ENCODE measurements at regions of chr20 and their contacts with region 1.

Region 1: DNA sequence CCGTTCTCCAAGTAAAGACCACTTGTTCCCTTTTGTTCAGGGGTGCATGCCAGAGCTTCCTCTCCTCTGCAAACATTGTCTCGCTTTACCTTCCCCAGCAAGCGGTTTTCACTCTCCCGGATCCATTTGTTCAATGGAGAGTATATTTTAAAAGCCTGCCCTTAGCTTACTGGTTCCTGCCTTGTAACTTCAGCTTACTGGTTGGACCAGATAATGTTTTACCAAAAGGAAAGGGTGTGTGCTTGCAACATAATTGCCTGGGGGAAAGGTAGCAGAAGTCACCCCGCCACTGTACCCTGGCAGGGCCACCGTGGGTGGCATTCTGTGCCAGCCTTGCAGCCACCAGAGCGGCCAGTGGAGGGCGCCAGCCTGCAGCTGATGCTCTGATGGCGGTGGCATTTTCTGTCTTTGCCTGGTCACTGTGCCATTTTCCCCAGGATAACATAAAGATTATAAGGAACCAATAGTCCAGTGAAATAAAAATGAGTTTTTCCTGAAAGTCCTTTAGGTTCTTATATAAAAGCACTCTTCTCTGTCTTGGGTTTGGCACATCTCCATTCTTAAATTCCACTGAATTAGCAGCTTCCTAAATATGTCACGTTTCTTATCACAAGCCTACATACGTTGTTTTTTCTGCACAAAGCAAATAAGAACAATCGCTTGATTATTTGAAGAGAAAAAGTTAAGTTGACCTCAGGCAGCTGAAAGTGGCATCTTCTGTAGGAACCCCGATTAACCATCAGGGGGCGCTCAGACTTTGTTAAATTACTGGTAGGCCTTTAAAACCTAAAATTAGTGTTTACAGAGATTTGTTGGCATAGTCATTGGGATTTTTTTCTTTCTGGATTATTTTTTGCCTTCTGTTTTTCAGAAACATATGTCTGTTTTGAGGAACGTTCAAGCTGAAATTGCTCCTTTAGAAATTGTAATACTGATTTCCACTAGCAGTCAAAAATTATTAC is 67.4 kb upstream of the XRN2 start:
- DNase-seq: no peak
- ATAC-seq: peak; percentile 82
- H3K4me3 ChIP-seq: no peak overlapping the region
- H3K27ac ChIP-seq: no peak overlapping the region
- H3K4me1 ChIP-seq: no peaks in the 10 kb centered on the region
- H3K27me3 ChIP-seq: no peaks in the 10 kb centered on the region
- CTCF ChIP-seq: peak; percentile 74 to 89 (median 78)
- EP300 ChIP-seq: no peak
- POLR2A ChIP-seq: no peak
- RAD21 ChIP-seq: peak; percentile 85

Region 2: GRCh38 chr20:21048841-21049273 is 186.9 kb before region 1 on chr20:
- CTCF ChIA-PET with region 1: interaction called, 3 read pairs
- POLR2A ChIA-PET with region 1: no interaction called
- RAD21 ChIA-PET with region 1: no interaction called
- SMC1A ChIA-PET with region 1: interaction called, 4 read pairs
- in situ Hi-C with region 1: no loop called
- intact Hi-C with region 1: loop called (anchors 10 kb)
- DNase-seq: no peak
- ATAC-seq: peak; percentile 93
- H3K4me3 ChIP-seq: no peak overlapping the region
- H3K27ac ChIP-seq: no peak overlapping the region
- H3K4me1 ChIP-seq: no peaks in the 10 kb centered on the region
- H3K27me3 ChIP-seq: no peaks in the 10 kb centered on the region; a peak in 1 of 4 replicates
- CTCF ChIP-seq: peak; percentile 69 to 96 (median 92)
- EP300 ChIP-seq: no peak
- POLR2A ChIP-seq: no peak
- RAD21 ChIP-seq: peak; percentile 65

Region 3: DNA sequence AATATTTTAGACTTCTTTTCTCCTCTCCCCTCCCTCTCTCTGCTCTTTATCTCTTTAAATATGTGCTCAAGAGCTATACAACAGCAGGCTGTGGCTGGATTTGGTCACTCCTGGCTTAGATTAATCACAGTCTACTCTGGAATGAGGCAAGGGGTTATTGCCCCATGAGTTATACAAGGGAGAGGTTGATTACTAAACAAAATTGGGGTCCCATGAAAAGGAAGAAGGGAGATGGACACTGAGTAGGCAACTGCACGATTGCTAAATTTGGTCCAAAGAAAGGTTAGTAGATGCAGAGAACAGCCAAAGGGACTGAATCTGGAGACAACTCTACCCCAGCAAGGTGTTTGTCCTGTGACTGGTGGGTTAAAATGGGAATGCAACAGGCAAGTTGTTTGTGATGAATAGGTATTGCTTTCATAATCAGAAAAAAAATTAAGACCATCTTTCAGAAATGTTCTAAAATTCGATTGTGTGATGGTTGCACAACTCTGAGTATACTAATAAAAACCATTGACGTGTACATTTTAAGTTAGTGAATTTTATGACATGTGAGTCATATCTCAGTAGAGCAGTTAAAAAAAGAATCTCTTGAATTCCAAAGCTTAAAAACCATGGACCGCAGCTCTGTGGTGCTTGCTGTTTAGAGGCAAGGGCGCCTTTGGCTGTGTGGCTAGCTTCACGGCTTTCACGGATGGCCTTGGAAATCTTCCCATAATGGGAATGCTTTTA is 52.8 kb before region 1 on chr20:
- CTCF ChIA-PET with region 1: no interaction called
- POLR2A ChIA-PET with region 1: no interaction called
- RAD21 ChIA-PET with region 1: no interaction called
- SMC1A ChIA-PET with region 1: no interaction called
- in situ Hi-C with region 1: no loop called
- intact Hi-C with region 1: no loop called
- DNase-seq: no peak
- ATAC-seq: no peak
- H3K4me3 ChIP-seq: no peak overlapping the region
- H3K27ac ChIP-seq: no peak overlapping the region
- H3K4me1 ChIP-seq: no peaks in the 10 kb centered on the region
- H3K27me3 ChIP-seq: no peaks in the 10 kb centered on the region
- CTCF ChIP-seq: no peak
- EP300 ChIP-seq: no peak
- POLR2A ChIP-seq: no peak
- RAD21 ChIP-seq: no peak

Region 4: GRCh38 chr20:21246161-21246560 is 10.4 kb after region 1 on chr20:
- CTCF ChIA-PET with region 1: interaction called, 18 read pairs
- POLR2A ChIA-PET with region 1: no interaction called
- RAD21 ChIA-PET with region 1: no interaction called
- SMC1A ChIA-PET with region 1: interaction called, 4 read pairs
- in situ Hi-C with region 1: no loop called
- intact Hi-C with region 1: no loop called
- DNase-seq: no peak
- ATAC-seq: no peak
- H3K4me3 ChIP-seq: no peak overlapping the region
- H3K27ac ChIP-seq: no peak overlapping the region
- H3K4me1 ChIP-seq: no peaks in the 10 kb centered on the region
- H3K27me3 ChIP-seq: no peaks in the 10 kb centered on the region
- CTCF ChIP-seq: no peak
- EP300 ChIP-seq: no peak
- POLR2A ChIP-seq: no peak
- RAD21 ChIP-seq: no peak

Region 5: GRCh38 chr20:21373436-21373835 is 137.7 kb after region 1 on chr20:
- CTCF ChIA-PET with region 1: interaction called, 4 read pairs
- POLR2A ChIA-PET with region 1: no interaction called
- RAD21 ChIA-PET with region 1: interaction called, 3 read pairs
- SMC1A ChIA-PET with region 1: no interaction called
- in situ Hi-C with region 1: no loop called
- intact Hi-C with region 1: loop called (anchors 5 kb)
- DNase-seq: no peak
- ATAC-seq: no peak
- H3K4me3 ChIP-seq: no peak overlapping the region
- H3K27ac ChIP-seq: no peak overlapping the region
- H3K4me1 ChIP-seq: no peaks in the 10 kb centered on the region
- H3K27me3 ChIP-seq: no peaks in the 10 kb centered on the region
- CTCF ChIP-seq: no peak
- EP300 ChIP-seq: no peak
- POLR2A ChIP-seq: no peak
- RAD21 ChIP-seq: no peak

Region 6: DNA sequence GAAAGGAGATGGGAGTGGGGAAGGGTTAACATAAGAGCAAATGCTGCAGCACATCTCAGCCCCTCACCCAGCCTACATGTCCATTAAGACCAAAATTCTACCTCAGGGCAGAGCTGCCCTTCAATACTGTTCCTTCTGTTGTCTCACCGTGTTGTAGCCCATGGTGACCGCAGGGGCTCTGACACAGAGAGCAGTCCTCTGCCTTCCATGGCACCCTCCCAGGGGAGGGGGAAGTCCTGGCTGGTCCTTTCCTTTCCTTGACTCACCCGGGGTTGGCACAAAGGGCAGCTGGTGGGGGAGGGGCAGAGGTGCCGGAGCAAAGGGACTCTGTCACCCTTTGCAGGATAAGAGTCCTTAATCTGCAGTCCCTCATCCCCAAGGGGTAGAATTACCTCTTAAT is 262.9 kb after region 1 on chr20:
- CTCF ChIA-PET with region 1: interaction called, 202 read pairs
- POLR2A ChIA-PET with region 1: no interaction called
- RAD21 ChIA-PET with region 1: interaction called, 75 read pairs
- SMC1A ChIA-PET with region 1: interaction called, 94 read pairs
- in situ Hi-C with region 1: loop called (anchors 5 kb)
- intact Hi-C with region 1: no loop called
- DNase-seq: no peak
- ATAC-seq: no peak
- H3K4me3 ChIP-seq: no peak overlapping the region
- H3K27ac ChIP-seq: no peak overlapping the region
- H3K4me1 ChIP-seq: peaks cover 9% of the 10 kb centered on the region
- H3K27me3 ChIP-seq: no peaks in the 10 kb centered on the region; a peak in 3 of 4 replicates
- CTCF ChIP-seq: no peak
- EP300 ChIP-seq: no peak
- POLR2A ChIP-seq: no peak
- RAD21 ChIP-seq: no peak

Region 7: DNA sequence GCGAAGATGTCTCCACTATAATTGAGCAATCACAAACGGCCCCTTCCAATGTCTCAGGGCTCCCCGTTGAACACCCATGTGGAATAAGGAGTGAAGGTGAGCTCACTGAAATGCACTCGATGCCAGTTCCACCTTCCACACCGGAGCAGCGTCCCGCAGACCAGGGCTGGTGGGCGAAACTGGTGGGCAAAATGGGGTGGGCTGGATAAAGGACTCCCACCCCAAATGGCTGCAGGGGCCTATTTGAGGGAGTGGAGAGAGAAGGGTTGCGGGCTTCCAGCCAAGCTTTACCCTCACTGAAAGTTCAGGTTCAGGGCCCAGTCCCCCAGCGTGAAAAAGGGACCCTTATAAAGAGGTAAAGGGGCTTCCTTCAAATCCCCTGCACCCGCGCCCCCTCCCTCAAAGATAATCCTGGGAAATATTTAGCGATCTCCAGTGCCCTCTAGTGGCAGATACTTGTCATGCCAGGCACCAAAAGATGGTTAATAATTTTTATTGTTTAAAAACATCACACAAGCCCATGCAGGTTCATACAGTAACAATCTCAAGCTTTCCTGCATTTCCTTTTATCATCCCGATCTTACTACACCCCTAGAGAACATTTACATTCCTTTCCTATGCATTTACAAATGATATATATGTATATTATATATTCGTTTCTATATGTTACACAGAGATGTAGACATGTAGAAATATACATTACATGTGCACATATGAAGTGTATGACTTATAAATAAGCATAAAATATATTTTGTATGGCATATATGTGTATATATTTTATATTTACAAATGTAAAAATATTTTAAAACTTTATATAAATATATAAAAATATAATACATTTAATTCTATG is 336.3 kb after region 1 on chr20:
- CTCF ChIA-PET with region 1: interaction called, 38 read pairs
- POLR2A ChIA-PET with region 1: interaction called, 5 read pairs
- RAD21 ChIA-PET with region 1: interaction called, 10 read pairs
- SMC1A ChIA-PET with region 1: interaction called, 22 read pairs
- in situ Hi-C with region 1: no loop called
- intact Hi-C with region 1: loop called (anchors 2 kb)
- DNase-seq: no peak
- ATAC-seq: peak; percentile 38; the same call in 2 of the 3 replicates
- H3K4me3 ChIP-seq: no peak overlapping the region
- H3K27ac ChIP-seq: no peak overlapping the region
- H3K4me1 ChIP-seq: no peaks in the 10 kb centered on the region
- H3K27me3 ChIP-seq: peaks cover 0 to 3% of the 10 kb centered on the region in 2 experiments; a peak in 2 of 4 replicates
- CTCF ChIP-seq: peak; percentile 72 to 85 (median 79)
- EP300 ChIP-seq: no peak
- POLR2A ChIP-seq: no peak
- RAD21 ChIP-seq: peak; percentile 77

Region 8: DNA sequence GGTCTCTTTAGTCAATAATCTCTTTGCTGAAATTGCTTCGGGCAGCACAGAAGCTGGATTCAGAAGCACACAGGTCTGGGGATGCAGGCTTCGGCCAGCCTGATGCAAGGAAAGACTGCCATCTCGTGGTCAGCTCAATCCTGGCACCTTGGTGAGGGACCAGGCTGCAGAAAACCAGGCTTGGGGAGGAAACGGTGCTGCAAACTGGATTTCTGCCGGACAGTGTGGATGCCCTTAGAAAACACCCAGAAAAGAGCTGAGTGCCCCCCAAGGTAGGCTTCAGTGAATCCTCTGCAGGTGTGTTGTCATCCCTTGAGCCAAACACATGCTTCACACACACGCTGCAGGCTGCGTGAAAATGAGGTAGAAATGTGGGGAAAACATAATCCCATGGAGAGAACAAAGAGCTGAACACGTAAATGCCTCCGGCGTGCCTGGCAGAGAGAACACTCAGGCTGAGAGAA is 379.9 kb after region 1 on chr20:
- CTCF ChIA-PET with region 1: interaction called, 24 read pairs
- POLR2A ChIA-PET with region 1: no interaction called
- RAD21 ChIA-PET with region 1: interaction called, 4 read pairs
- SMC1A ChIA-PET with region 1: interaction called, 9 read pairs
- in situ Hi-C with region 1: no loop called
- intact Hi-C with region 1: loop called (anchors 1 kb)
- DNase-seq: no peak
- ATAC-seq: peak; percentile 94
- H3K4me3 ChIP-seq: no peak overlapping the region
- H3K27ac ChIP-seq: no peak overlapping the region
- H3K4me1 ChIP-seq: no peaks in the 10 kb centered on the region
- H3K27me3 ChIP-seq: no peaks in the 10 kb centered on the region
- CTCF ChIP-seq: peak; percentile 78 to 87 (median 79)
- EP300 ChIP-seq: no peak
- POLR2A ChIP-seq: no peak
- RAD21 ChIP-seq: peak; percentile 73

Region 9: GRCh38 chr20:21640561-21641182 is 404.9 kb after region 1 on chr20:
- CTCF ChIA-PET with region 1: no interaction called
- POLR2A ChIA-PET with region 1: no interaction called
- RAD21 ChIA-PET with region 1: no interaction called
- SMC1A ChIA-PET with region 1: no interaction called
- in situ Hi-C with region 1: no loop called
- intact Hi-C with region 1: no loop called
- DNase-seq: no peak
- ATAC-seq: peak; percentile 47; the same call in 1 of the 3 replicates
- H3K4me3 ChIP-seq: no peak overlapping the region
- H3K27ac ChIP-seq: no peak overlapping the region
- H3K4me1 ChIP-seq: no peaks in the 10 kb centered on the region
- H3K27me3 ChIP-seq: no peaks in the 10 kb centered on the region
- CTCF ChIP-seq: peak in 2 of 3 experiments; percentile 16 to 19; a peak in 2 of 6 replicates
- EP300 ChIP-seq: no peak
- POLR2A ChIP-seq: no peak
- RAD21 ChIP-seq: 0 out of 2 replicates have a peak, but pooled peaks have one; percentile 14